ENCODE measurements at regions of chr5 and their contacts with region 1.

Region 1: GRCh38 chr5:37005946-37006540 is 129.5 kb downstream of the NIPBL start:
- DNase-seq: peak; percentile 39
- ATAC-seq: peak; percentile 59; the same call in 1 of the 2 replicates
- H3K4me3 ChIP-seq: no peak overlapping the region
- H3K27ac ChIP-seq: no peak overlapping the region
- H3K4me1 ChIP-seq: peaks cover 2% of the 10 kb centered on the region
- H3K27me3 ChIP-seq: no peaks in the 10 kb centered on the region
- CTCF ChIP-seq: peak; percentile 60
- POLR2A ChIP-seq: no peak
- RAD21 ChIP-seq: peak; percentile 49

Region 2: DNA sequence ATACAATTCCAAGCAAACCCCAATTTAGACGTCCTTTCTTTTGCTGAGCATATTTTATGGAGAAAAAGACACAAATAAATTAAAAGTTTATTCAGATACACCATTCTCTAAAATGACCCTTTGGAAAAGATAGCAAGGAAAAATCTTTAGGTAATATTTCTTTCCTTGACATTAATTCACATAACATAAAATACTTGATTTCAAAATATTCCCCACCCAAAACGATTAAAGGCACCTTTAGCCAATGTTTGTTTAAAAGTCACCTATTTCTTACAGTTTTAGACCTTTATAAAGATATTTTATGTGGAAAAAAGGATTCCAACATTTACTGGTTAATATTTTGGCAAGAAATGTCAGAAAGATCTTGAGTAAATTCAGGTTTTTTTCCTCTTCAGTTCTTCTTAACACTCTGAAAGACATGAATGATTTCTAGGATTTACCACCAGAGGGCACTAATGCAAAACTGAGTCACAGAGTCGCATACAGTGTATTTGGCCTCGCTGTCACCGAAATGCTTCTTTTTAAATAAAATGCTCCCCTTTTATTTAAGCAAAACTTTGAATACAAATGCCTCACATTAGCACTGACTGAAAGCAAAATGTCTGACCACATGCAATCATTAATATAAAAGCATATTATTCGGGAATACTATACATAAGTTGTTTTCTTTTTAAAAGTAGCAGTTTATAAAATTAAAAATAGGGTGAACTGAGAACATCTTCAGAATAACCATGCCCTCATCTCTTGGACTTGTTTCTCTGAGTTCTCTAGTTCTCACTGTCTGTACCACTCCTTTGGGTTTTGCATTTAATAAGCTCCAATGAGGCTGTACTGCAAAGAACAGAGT is 277.1 kb before region 1 on chr5:
- CTCF ChIA-PET with region 1: interaction called, 9 read pairs
- POLR2A ChIA-PET with region 1: no interaction called
- dilution Hi-C with region 1: no loop called
- in situ Hi-C with region 1: no loop called
- intact Hi-C with region 1: loop called (anchors 1 kb)
- DNase-seq: peak; percentile 73
- ATAC-seq: peak; percentile 92
- H3K4me3 ChIP-seq: no peak overlapping the region
- H3K27ac ChIP-seq: no peak overlapping the region
- H3K4me1 ChIP-seq: no peaks in the 10 kb centered on the region
- H3K27me3 ChIP-seq: peaks cover 15% of the 10 kb centered on the region
- CTCF ChIP-seq: peak; percentile 68
- POLR2A ChIP-seq: no peak
- RAD21 ChIP-seq: peak; percentile 52

Region 3: GRCh38 chr5:36739751-36740221 is 266.3 kb before region 1 on chr5:
- CTCF ChIA-PET with region 1: interaction called, 16 read pairs
- POLR2A ChIA-PET with region 1: no interaction called
- dilution Hi-C with region 1: no loop called
- in situ Hi-C with region 1: loop called (anchors 10 kb)
- intact Hi-C with region 1: loop called (anchors 2 kb)
- DNase-seq: peak; percentile 69
- ATAC-seq: peak; percentile 61
- H3K4me3 ChIP-seq: no peak overlapping the region; the same call in 1 of the 2 replicates
- H3K27ac ChIP-seq: no peak overlapping the region
- H3K4me1 ChIP-seq: peaks cover 4% of the 10 kb centered on the region
- H3K27me3 ChIP-seq: peaks cover 18% of the 10 kb centered on the region
- CTCF ChIP-seq: peak; percentile 72
- POLR2A ChIP-seq: no peak
- RAD21 ChIP-seq: peak; percentile 59

Region 4: GRCh38 chr5:36744773-36745589 is 261.1 kb before region 1 on chr5:
- CTCF ChIA-PET with region 1: interaction called, 16 read pairs
- POLR2A ChIA-PET with region 1: no interaction called
- dilution Hi-C with region 1: no loop called
- in situ Hi-C with region 1: loop called (anchors 10 kb)
- intact Hi-C with region 1: loop called (anchors 2 kb)
- DNase-seq: peak; percentile 25
- ATAC-seq: peak; percentile 58
- H3K4me3 ChIP-seq: peak overlapping the region; percentile 43
- H3K27ac ChIP-seq: no peak overlapping the region
- H3K4me1 ChIP-seq: peaks cover 4% of the 10 kb centered on the region
- H3K27me3 ChIP-seq: peaks cover 25% of the 10 kb centered on the region
- CTCF ChIP-seq: no peak
- POLR2A ChIP-seq: no peak
- RAD21 ChIP-seq: no peak; the same call in 1 of the 2 replicates

Region 5: GRCh38 chr5:36897616-36898015 is 108.4 kb before region 1 on chr5:
- CTCF ChIA-PET with region 1: no interaction called
- POLR2A ChIA-PET with region 1: no interaction called
- dilution Hi-C with region 1: no loop called
- in situ Hi-C with region 1: no loop called
- intact Hi-C with region 1: no loop called
- DNase-seq: peak; percentile 80
- ATAC-seq: peak; percentile 90
- H3K4me3 ChIP-seq: no peak overlapping the region
- H3K27ac ChIP-seq: no peak overlapping the region
- H3K4me1 ChIP-seq: no peaks in the 10 kb centered on the region
- H3K27me3 ChIP-seq: no peaks in the 10 kb centered on the region
- CTCF ChIP-seq: no peak
- POLR2A ChIP-seq: no peak
- RAD21 ChIP-seq: no peak